ENCODE measurements at regions of chr22 and their contacts with region 1.

Region 1: DNA sequence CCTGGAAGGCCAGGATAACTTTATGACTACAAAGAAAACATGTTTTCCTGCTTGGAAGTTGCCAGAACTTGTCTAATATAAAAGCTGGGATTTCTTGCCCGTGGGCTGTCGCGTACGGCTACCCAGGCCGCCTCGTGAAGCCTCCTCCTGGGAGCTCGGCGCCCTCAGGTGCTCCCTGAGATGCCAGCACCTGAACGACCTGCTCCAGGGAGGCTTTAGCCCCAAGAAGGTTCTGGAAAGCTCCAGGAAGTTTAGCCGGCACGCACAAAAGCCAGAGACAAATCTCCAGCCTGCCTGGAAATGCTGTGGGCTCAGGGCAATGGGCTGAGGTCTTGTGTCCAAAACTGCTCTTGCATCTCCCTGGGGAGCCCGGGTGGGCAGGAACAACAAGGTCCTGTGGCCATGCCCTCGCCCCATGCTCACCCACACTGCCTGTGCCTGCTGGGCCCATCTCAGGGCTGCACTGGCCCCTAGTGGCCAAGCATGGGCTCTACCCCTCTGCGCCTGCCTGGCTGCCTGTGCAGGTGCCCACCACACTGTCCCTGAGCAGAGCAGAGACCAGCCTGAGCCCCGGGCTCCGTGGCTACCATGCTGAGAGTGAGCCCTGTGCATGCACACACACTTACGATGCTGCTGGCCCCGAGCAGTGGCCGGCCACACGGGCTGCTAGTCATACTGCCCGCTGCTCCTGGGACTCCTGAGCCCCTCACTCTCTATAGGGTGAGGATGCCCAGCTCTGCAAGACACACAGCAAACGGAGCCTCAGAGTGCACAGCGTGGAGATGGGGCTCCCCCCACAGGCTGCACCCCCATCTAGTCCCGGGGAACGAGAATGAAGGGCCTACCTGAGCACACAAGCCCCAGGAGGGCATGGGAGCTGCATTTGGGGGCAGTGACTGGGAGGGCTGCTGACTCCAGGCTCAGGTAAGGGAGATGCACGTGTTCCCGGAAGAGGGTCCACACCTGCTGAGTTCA is 4.9 kb upstream of the CELSR1 start:
- DNase-seq: peak; percentile 76
- H3K4me3 ChIP-seq: no peak overlapping the region
- H3K27ac ChIP-seq: no peak overlapping the region
- H3K4me1 ChIP-seq: peaks cover 4 to 28% (median 22%) of the 10 kb centered on the region in 4 donors
- H3K27me3 ChIP-seq: peaks cover 38% of the 10 kb centered on the region
- CTCF ChIP-seq: peak; percentile 87 to 93 (median 92)
- EP300 ChIP-seq: no peak
- POLR2A ChIP-seq: no peak

Region 2: GRCh38 chr22:46116491-46116958 is 425.8 kb before region 1 on chr22:
- in situ Hi-C with region 1: loop called in 1 of 4 experiments (anchors 25 kb)
- intact Hi-C with region 1: loop called (anchors 10 kb)
- DNase-seq: peak; percentile 95
- H3K4me3 ChIP-seq: no peak overlapping the region
- H3K27ac ChIP-seq: peak overlapping the region; percentile 70 to 83 (median 77)
- H3K4me1 ChIP-seq: peaks cover 11 to 15% (median 12%) of the 10 kb centered on the region in 4 donors
- H3K27me3 ChIP-seq: no peaks in the 10 kb centered on the region
- CTCF ChIP-seq: peak; percentile 83 to 99 (median 90)
- EP300 ChIP-seq: no peak
- POLR2A ChIP-seq: no peak

Region 3: GRCh38 chr22:46122511-46122971 is 419.8 kb before region 1 on chr22:
- in situ Hi-C with region 1: loop called in 1 of 4 experiments (anchors 25 kb)
- intact Hi-C with region 1: loop called (anchors 10 kb)
- DNase-seq: peak; percentile 78
- H3K4me3 ChIP-seq: peak overlapping the region in 1 of 4 donors; percentile 7
- H3K27ac ChIP-seq: no peak overlapping the region
- H3K4me1 ChIP-seq: peaks cover 4 to 20% (median 14%) of the 10 kb centered on the region in 4 donors
- H3K27me3 ChIP-seq: no peaks in the 10 kb centered on the region
- CTCF ChIP-seq: peak; percentile 94 to 97 (median 96)
- EP300 ChIP-seq: no peak
- POLR2A ChIP-seq: no peak

Region 4: GRCh38 chr22:46346680-46347405 is 195.5 kb before region 1 on chr22:
- in situ Hi-C with region 1: loop called in 2 of 4 experiments (anchors 10 kb)
- intact Hi-C with region 1: no loop called
- DNase-seq: no peak
- H3K4me3 ChIP-seq: no peak overlapping the region
- H3K27ac ChIP-seq: no peak overlapping the region
- H3K4me1 ChIP-seq: no peaks in the 10 kb centered on the region
- H3K27me3 ChIP-seq: no peaks in the 10 kb centered on the region
- CTCF ChIP-seq: no peak
- EP300 ChIP-seq: no peak
- POLR2A ChIP-seq: no peak

Region 5: GRCh38 chr22:46355371-46355995 is 186.8 kb before region 1 on chr22:
- in situ Hi-C with region 1: loop called in 3 of 4 experiments (anchors 5 to 10 kb)
- intact Hi-C with region 1: no loop called
- DNase-seq: peak; percentile 67
- H3K4me3 ChIP-seq: no peak overlapping the region
- H3K27ac ChIP-seq: no peak overlapping the region
- H3K4me1 ChIP-seq: no peaks in the 10 kb centered on the region
- H3K27me3 ChIP-seq: no peaks in the 10 kb centered on the region
- CTCF ChIP-seq: peak; percentile 62 to 78 (median 73)
- EP300 ChIP-seq: no peak
- POLR2A ChIP-seq: no peak

Region 6: GRCh38 chr22:46362203-46362933 is 179.9 kb before region 1 on chr22:
- in situ Hi-C with region 1: loop called in 3 of 4 experiments (anchors 5 to 10 kb)
- intact Hi-C with region 1: loop called (anchors 2 kb)
- DNase-seq: peak; percentile 31
- H3K4me3 ChIP-seq: no peak overlapping the region
- H3K27ac ChIP-seq: no peak overlapping the region
- H3K4me1 ChIP-seq: no peaks in the 10 kb centered on the region
- H3K27me3 ChIP-seq: peaks cover 7% of the 10 kb centered on the region
- CTCF ChIP-seq: no peak
- EP300 ChIP-seq: no peak
- POLR2A ChIP-seq: no peak

Region 7: DNA sequence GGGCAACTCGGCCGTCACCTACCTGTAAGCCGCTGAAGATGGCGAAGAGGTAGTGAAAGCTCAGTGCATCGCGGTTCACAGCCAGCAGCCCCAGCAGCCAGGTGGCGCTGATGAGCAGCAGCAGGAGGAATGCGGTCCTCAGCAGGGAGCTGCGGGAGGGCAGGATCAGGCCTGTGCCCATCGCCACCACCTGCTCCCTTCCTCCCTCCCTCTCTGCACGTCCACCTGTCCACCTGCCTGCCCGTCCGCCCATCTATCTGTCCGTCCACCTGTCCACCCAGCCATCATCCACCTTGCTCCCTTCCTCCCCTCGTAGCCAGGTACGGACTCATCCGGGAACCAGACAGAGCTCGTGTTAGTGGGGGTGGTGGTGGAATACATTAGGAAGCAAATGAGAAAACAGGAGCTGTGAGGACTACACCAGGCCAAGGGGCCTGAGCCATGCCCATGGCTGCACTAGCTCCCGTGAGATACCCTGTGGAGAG is 174.5 kb before region 1 on chr22:
- in situ Hi-C with region 1: loop called in 2 of 4 experiments (anchors 5 to 10 kb)
- intact Hi-C with region 1: loop called (anchors 2 kb)
- DNase-seq: peak; percentile 87
- H3K4me3 ChIP-seq: no peak overlapping the region
- H3K27ac ChIP-seq: no peak overlapping the region
- H3K4me1 ChIP-seq: peaks cover 0 to 11% (median 5%) of the 10 kb centered on the region in 4 donors
- H3K27me3 ChIP-seq: peaks cover 8% of the 10 kb centered on the region
- CTCF ChIP-seq: peak; percentile 81 to 95 (median 90)
- EP300 ChIP-seq: no peak
- POLR2A ChIP-seq: no peak

Region 8: DNA sequence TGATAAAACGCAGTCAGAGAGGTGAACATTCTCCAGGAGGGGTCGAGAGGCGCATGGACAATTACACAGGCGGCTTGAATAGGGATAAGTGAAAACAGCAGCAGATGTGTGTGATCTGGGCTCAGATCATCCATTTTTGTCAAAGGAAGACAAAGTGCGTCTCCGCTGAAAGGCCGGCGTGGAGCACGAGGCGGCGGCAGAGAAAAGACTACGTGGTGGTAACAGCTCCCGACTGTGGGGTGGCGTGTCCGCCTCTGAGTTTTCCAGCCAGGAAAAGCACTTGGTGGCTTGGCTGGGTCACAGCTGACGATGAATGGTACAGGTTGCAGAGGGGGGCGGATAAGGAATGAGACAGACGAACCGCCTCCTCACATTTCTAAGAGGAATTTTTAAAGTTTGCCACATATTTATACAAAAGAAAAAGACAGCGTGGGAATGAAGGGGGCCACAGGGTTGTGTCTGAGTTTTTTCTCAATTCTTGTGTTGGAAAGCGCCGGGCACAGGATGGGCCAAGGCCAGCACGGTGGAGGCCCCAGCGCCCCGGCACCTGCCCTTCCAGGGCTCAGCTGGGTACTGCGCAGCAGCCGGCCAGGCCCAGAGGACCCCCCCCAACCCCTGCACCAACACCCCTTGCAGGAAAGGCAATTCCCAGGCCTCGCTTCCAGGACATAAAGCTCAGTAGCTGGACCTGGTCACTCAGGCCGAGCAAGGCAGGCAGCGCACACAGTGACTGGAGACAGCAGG is 126.3 kb before region 1 on chr22:
- in situ Hi-C with region 1: no loop called
- intact Hi-C with region 1: no loop called
- DNase-seq: no peak
- H3K4me3 ChIP-seq: no peak overlapping the region
- H3K27ac ChIP-seq: no peak overlapping the region
- H3K4me1 ChIP-seq: peaks cover 0 to 5% (median 1%) of the 10 kb centered on the region in 4 donors
- H3K27me3 ChIP-seq: no peaks in the 10 kb centered on the region
- CTCF ChIP-seq: no peak
- EP300 ChIP-seq: no peak
- POLR2A ChIP-seq: no peak

Region 9: GRCh38 chr22:46476547-46476941 is 65.8 kb before region 1 on chr22:
- in situ Hi-C with region 1: no loop called
- intact Hi-C with region 1: no loop called
- DNase-seq: no peak
- H3K4me3 ChIP-seq: no peak overlapping the region
- H3K27ac ChIP-seq: no peak overlapping the region
- H3K4me1 ChIP-seq: no peaks in the 10 kb centered on the region
- H3K27me3 ChIP-seq: peaks cover 2% of the 10 kb centered on the region
- CTCF ChIP-seq: no peak
- EP300 ChIP-seq: no peak
- POLR2A ChIP-seq: no peak

Region 10: DNA sequence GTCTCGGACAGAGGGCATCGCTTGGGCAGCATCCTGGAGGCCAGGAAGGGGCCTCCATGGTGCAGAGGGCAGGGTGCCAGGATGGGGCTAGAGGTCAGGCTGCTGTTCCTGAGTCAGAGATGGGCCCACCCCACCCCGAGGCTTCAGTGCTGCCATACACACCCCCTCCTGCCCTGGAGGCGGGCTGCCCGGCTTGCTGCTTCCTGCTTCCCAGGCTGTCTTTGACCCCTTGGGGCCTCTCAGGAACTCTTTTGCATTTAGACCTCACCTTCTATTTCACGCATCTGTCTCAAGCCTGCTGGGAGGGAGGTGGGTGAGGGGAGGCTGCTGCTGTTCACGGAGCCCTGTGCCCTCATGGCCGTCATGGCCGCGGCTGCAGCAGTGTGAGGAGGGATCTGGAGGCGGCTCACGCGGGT is 71.3 kb after region 1 on chr22:
- in situ Hi-C with region 1: no loop called
- intact Hi-C with region 1: no loop called
- DNase-seq: peak; percentile 40
- H3K4me3 ChIP-seq: peak overlapping the region in 1 of 4 donors; percentile 9
- H3K27ac ChIP-seq: peak overlapping the region; percentile 50 to 65 (median 62)
- H3K4me1 ChIP-seq: peaks cover 20 to 58% (median 49%) of the 10 kb centered on the region in 4 donors
- H3K27me3 ChIP-seq: no peaks in the 10 kb centered on the region
- CTCF ChIP-seq: no peak
- EP300 ChIP-seq: no peak
- POLR2A ChIP-seq: no peak

Measured in transverse colon (tissue), 4 donors.